ENCODE measurements at regions of chr17 and their contacts with region 1.

Region 1: DNA sequence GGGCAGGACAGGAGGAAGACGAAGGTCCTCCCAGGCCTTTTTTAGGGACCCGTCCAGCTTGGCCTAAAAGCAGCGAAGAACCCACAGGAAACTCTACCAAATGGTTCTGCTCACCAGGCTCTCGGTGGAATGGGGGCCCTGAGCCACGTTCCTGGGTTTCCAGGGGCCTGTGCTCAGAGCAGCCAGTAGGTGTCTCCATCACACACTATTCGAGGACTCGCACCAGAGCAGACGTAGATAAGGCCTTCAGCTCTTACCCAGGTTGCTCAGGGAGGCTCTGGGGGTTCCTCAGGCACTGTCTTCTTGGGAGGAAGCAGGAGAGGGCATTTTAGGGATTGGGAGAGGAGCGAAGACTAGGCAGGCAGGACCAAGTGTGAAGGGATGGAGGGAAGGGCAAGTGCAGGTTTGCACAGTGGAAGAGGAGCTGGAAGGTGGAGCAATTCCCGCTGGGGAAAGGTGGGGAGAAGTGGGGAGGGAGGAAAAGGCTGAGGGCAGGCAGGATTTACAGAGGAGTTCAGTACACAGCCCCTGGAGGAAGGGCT is 157.1 kb downstream of the RGS9 start:
- DNase-seq: peak; percentile 74 to 76
- ATAC-seq: peak; percentile 63

Region 2: DNA sequence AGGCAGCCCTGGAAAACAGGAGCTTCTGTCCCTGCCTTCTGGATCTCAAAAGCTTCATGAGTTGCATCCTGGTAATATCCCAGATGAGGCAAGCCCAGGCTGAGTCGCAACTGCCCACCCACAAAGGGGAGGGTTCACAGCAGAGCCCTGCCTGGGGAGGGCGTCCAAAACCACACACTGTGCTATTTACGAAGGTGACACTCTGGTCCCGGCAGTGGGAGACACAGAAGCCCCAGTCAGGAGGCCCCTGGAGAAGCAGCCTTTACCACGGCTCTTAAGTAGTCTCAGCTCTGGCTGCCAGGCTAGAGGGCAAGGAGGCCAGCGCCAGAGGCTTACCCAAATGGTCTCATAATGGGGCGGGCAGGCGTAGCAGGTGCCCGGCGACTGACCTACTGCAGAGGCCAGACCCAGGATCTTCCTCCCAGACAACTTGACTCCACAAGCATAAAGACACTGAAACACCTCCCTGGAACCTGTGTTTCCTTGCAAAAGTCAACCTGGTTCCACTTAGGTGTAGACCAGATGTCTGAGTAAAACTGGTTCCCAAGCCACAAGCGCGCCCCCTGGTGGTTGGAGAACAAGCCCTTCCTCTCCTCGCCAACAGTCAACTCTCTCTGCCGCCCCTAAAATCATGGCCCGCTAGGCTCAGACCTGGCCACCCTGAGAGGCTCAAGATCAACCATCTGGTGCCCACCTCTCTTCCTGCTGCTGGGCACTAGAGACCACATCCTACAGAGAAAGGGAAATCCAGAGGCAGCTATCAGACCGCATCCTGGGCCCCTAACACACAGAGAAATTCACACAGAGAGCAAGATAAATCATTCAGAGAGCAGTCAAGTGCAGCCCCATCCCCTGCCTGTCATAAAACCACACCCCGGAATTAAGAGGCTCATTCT is 262.0 kb after region 1 on chr17:
- intact Hi-C with region 1: loop called in 1 of 2 experiments (anchors 10 kb)
- DNase-seq: peak; percentile 89 to 97
- ATAC-seq: peak; percentile 54

Region 3: DNA sequence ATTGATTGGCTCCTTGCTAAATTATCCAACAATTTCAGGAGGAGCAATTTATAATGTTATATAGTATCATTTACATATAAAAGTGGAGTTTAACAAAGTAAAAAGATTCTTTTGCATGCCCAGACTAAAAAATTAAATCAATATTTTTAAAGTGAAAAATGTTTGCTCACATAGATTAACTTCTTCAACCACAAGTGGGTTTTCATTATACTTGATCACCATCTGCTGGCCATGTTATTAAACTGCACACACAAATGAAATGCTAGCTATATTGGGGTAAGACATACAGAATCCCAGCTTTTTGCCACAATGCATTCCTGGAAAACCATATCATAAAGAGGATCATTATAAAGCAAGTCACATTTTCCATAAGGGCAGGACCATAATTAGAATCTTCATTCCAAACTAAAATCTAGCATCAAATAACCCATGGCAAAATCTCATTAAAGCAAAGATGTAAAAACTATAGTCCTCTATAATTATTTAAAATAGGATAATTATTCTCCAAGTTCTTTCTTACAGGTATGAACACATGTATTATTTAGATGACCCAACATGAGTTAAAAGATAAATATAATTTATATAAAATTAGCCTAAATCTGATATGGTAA is 871.4 kb after region 1 on chr17:
- intact Hi-C with region 1: loop called in 1 of 2 experiments (anchors 5 kb)
- DNase-seq: no peak
- ATAC-seq: peak; percentile 63